MCF 10A (cell line): ENCODE measurements at regions of chr6 and their contacts with region 1.

Region 1: DNA sequence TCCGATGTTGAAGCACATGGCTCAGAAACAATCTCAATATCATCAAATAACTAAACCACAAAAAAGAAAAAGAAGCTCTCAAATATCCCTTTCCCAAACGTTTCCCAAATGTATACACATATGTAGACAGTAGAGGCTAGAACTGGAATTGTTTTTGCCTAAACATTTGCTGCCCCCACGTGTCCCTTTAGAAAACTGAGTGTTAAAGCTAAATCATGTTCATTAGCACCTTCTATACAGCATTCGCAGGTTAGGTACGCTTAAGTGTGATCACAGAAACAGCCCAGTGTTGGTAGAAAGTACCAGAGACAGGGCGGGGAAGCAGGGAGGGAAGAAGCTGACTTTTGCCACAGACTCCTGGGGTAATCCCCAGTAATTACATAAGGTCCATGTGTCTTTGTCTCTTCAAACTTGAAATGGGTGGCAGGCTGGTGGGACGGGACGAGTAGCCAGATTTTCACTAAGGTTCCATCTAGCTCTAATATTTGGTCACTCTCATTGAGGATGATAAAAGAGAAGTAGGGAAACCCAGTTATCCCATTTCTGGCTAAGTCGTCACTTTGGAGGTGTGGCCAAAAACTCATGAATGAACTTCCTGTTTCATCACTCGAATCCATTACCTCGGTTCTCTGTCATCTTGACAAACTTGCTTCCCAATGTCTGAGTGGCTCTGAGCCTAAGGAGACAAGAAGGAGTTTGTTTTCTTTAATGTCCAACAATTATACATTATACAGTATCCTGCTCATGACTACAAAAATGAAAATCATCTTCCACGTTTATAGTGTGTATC is 15.0 kb upstream of the TFAP2A start:
- DNase-seq: peak; percentile 88
- H3K4me3 Mint-ChIP-seq: no peak overlapping the region
- H3K27ac Mint-ChIP-seq: peak overlapping the region; percentile 92
- H3K4me1 Mint-ChIP-seq: peaks cover 40% of the 10 kb centered on the region
- H3K27me3 Mint-ChIP-seq: no peaks in the 10 kb centered on the region
- CTCF ChIP-seq: peak; percentile 67

Region 2: DNA sequence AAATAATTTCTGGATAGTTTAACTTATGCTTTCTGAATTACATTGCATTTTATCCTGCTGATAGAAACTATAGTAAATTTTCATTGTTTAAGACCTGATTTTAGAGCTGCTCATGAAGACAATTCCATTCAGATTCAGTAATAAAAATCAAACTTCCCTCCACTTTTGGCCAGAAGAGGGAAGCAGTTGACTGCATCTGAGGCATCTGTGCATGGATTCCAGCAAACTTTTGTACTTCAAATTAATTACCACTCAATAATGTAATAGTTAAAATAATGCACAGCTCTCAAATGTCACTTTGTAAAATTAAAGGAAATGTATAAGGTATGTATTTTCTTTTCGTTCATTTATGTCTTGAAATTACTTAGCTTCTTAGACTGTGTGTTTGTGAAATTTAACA is 1930.3 kb before region 1 on chr6:
- CTCF ChIA-PET with region 1: interaction called, 5 read pairs
- POLR2A ChIA-PET with region 1: no interaction called
- intact Hi-C with region 1: loop called (anchors 1 kb)
- DNase-seq: peak; percentile 46
- H3K4me3 Mint-ChIP-seq: no peak overlapping the region
- H3K27ac Mint-ChIP-seq: no peak overlapping the region
- H3K4me1 Mint-ChIP-seq: no peaks in the 10 kb centered on the region
- H3K27me3 Mint-ChIP-seq: no peaks in the 10 kb centered on the region
- CTCF ChIP-seq: peak; percentile 47

Region 3: DNA sequence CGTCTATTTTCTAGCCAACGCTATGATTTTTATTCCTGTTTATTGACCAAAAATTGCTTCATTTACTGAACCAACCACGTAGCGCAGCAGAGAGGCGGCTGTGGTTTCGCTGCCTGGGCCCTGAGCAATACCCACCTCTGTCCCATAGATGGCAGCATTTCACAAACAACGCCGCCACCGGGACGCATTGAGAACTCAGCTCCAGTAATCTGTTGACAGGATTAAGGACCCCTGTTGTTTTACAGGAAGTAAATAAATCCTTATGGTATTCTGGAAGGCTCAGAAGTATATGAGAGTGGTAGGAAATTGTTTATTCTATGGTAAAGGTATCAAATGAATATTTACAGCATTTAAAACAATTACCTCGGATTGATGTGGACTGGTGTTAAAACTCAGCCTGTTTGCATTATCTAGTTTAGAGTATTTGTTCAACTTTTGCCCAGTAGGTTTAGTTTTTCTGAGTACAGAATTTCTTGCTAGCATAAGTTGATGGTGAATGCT is 1446.6 kb before region 1 on chr6:
- CTCF ChIA-PET with region 1: interaction called, 14 read pairs
- POLR2A ChIA-PET with region 1: interaction called, 8 read pairs
- intact Hi-C with region 1: loop called (anchors 1 kb)
- DNase-seq: peak; percentile 74
- H3K4me3 Mint-ChIP-seq: no peak overlapping the region
- H3K27ac Mint-ChIP-seq: no peak overlapping the region
- H3K4me1 Mint-ChIP-seq: no peaks in the 10 kb centered on the region
- H3K27me3 Mint-ChIP-seq: no peaks in the 10 kb centered on the region
- CTCF ChIP-seq: peak; percentile 95

Region 4: GRCh38 chr6:9927283-9927682 is 502.6 kb before region 1 on chr6:
- CTCF ChIA-PET with region 1: no interaction called
- POLR2A ChIA-PET with region 1: no interaction called
- intact Hi-C with region 1: no loop called
- DNase-seq: no peak
- H3K4me3 Mint-ChIP-seq: no peak overlapping the region
- H3K27ac Mint-ChIP-seq: no peak overlapping the region
- H3K4me1 Mint-ChIP-seq: peaks cover 6% of the 10 kb centered on the region
- H3K27me3 Mint-ChIP-seq: no peaks in the 10 kb centered on the region
- CTCF ChIP-seq: no peak

Region 5: DNA sequence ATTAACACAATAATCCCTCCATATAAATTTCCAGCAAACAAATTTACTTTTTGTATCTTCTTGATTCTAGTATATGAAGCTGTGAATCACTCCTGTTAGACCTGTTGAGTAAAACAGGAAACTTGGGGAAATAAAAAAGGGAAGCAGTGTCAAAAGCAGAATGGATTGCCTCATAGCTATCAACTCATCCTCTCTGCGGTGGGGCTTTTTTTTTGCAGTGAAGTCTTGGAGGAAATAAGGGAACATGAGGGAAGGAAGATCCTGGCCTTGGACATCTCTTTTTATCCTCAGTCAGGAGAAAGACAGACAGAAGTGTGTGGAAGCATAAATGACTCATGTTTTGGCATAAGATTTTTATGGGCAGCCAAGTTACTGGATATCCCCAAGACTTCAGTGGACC is 347.4 kb before region 1 on chr6:
- CTCF ChIA-PET with region 1: interaction called, 9 read pairs
- POLR2A ChIA-PET with region 1: interaction called, 22 read pairs
- intact Hi-C with region 1: no loop called
- DNase-seq: peak; percentile 71
- H3K4me3 Mint-ChIP-seq: no peak overlapping the region
- H3K27ac Mint-ChIP-seq: peak overlapping the region; percentile 33
- H3K4me1 Mint-ChIP-seq: peaks cover 49% of the 10 kb centered on the region
- H3K27me3 Mint-ChIP-seq: no peaks in the 10 kb centered on the region
- CTCF ChIP-seq: no peak

Region 6: DNA sequence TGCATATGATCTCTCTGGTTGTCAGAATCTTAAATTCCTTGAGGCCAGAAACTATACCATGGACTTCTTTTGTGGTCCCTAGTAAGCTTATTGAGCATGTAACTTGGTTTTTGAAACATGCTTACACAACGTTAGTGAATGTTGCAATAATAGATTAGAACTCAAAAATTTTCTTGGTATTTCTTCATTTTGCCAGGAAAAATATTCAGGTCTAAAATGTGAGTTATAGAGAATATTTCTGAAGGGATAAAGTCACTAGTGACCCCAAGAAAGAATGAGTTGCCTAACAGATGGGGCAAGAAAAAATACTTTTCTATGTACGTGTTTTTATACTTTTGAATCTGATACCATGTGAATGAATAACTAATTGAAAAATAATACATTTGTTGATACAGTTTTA is 210.3 kb before region 1 on chr6:
- CTCF ChIA-PET with region 1: no interaction called
- POLR2A ChIA-PET with region 1: no interaction called
- intact Hi-C with region 1: no loop called
- DNase-seq: peak; percentile 4
- H3K4me3 Mint-ChIP-seq: no peak overlapping the region
- H3K27ac Mint-ChIP-seq: no peak overlapping the region
- H3K4me1 Mint-ChIP-seq: peaks cover 15% of the 10 kb centered on the region
- H3K27me3 Mint-ChIP-seq: no peaks in the 10 kb centered on the region
- CTCF ChIP-seq: no peak

Region 7: DNA sequence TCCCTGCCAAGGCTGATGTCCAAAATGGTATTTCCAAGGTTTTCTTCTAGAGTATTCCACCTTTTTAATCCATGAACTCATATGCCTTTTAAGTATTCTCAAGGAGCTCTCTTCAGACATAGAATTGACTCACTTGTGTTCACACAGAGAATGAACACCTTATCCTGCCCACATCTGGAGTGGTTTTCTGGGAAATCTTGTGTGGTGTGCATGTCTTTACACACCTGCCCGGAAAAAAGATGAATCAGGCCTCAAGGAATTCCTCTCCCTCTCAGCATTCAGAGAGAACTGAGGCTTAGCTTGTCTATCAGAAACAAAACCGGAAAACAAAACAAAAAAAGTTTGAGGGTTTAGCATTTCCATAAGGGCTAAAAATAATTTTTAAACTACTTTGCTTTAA is 163.8 kb before region 1 on chr6:
- CTCF ChIA-PET with region 1: no interaction called
- POLR2A ChIA-PET with region 1: no interaction called
- intact Hi-C with region 1: no loop called
- DNase-seq: peak; percentile 29
- H3K4me3 Mint-ChIP-seq: no peak overlapping the region
- H3K27ac Mint-ChIP-seq: peak overlapping the region; percentile 73
- H3K4me1 Mint-ChIP-seq: peaks cover 5% of the 10 kb centered on the region
- H3K27me3 Mint-ChIP-seq: no peaks in the 10 kb centered on the region
- CTCF ChIP-seq: no peak

Region 8: GRCh38 chr6:10441004-10441662 is 11.3 kb after region 1 on chr6:
- CTCF ChIA-PET with region 1: interaction called, 8 read pairs
- POLR2A ChIA-PET with region 1: interaction called, 76 read pairs
- intact Hi-C with region 1: no loop called
- DNase-seq: peak; percentile 98
- H3K4me3 Mint-ChIP-seq: peak overlapping the region; percentile 40
- H3K27ac Mint-ChIP-seq: peak overlapping the region; percentile 98
- H3K4me1 Mint-ChIP-seq: peaks cover 15% of the 10 kb centered on the region
- H3K27me3 Mint-ChIP-seq: no peaks in the 10 kb centered on the region
- CTCF ChIP-seq: no peak

Region 9: GRCh38 chr6:10759312-10759839 is 329.5 kb after region 1 on chr6:
- CTCF ChIA-PET with region 1: no interaction called
- POLR2A ChIA-PET with region 1: no interaction called
- intact Hi-C with region 1: no loop called
- DNase-seq: peak; percentile 92
- H3K4me3 Mint-ChIP-seq: no peak overlapping the region
- H3K27ac Mint-ChIP-seq: peak overlapping the region; percentile 86
- H3K4me1 Mint-ChIP-seq: peaks cover 20% of the 10 kb centered on the region
- H3K27me3 Mint-ChIP-seq: no peaks in the 10 kb centered on the region
- CTCF ChIP-seq: peak; percentile 51